ENCODE measurements at regions of chr7 and their contacts with region 1.

Region 1: DNA sequence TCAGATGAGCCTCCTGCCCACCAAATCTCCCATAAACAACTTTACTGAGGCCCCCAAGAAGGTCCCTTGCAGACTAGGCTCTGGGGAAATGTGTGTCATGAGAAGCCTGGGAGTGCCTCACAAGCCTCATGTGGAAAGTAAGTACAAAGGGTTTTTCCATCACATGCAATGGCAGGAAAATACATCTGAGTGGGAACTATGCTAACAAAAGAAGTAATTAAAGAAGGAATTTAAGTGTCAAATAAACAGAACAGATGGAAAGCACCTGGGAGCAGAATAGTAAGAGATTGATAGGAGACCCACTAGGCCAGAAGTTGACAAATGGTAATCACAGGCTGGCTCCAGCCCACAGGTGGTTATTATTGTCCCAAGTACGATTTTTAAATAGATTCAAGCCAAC is 20.5 kb downstream of the GSAP start:
- DNase-seq: no peak
- ATAC-seq: no peak
- H3K4me3 ChIP-seq: no peak overlapping the region
- H3K27ac ChIP-seq: peak overlapping the region; percentile 72
- H3K4me1 ChIP-seq: peaks cover 84% of the 10 kb centered on the region
- H3K27me3 ChIP-seq: no peaks in the 10 kb centered on the region
- CTCF ChIP-seq: no peak
- EP300 ChIP-seq: no peak
- POLR2A ChIP-seq: no peak
- RAD21 ChIP-seq: no peak

Region 2: GRCh38 chr7:77258014-77258413 is 137.6 kb before region 1 on chr7:
- CTCF ChIA-PET with region 1: no interaction called
- POLR2A ChIA-PET with region 1: no interaction called
- in situ Hi-C with region 1: no loop called
- intact Hi-C with region 1: no loop called
- DNase-seq: no peak
- ATAC-seq: no peak
- H3K4me3 ChIP-seq: no peak overlapping the region
- H3K27ac ChIP-seq: no peak overlapping the region
- H3K4me1 ChIP-seq: no peaks in the 10 kb centered on the region
- H3K27me3 ChIP-seq: no peaks in the 10 kb centered on the region
- CTCF ChIP-seq: no peak
- EP300 ChIP-seq: no peak
- POLR2A ChIP-seq: no peak
- RAD21 ChIP-seq: no peak

Region 3: GRCh38 chr7:77409739-77410547 is 14.3 kb after region 1 on chr7:
- CTCF ChIA-PET with region 1: no interaction called
- POLR2A ChIA-PET with region 1: interaction called, 22 read pairs
- in situ Hi-C with region 1: no loop called
- intact Hi-C with region 1: loop called (anchors 1 kb)
- DNase-seq: peak; percentile 95
- ATAC-seq: peak; percentile 83
- H3K4me3 ChIP-seq: peak overlapping the region; percentile 15 to 49 (median 16); a peak in 4 of 6 replicates
- H3K27ac ChIP-seq: peak overlapping the region; percentile 96
- H3K4me1 ChIP-seq: peaks cover 88% of the 10 kb centered on the region
- H3K27me3 ChIP-seq: no peaks in the 10 kb centered on the region
- CTCF ChIP-seq: no peak
- EP300 ChIP-seq: peak; percentile 69 to 97; a peak in 3 of 4 replicates
- POLR2A ChIP-seq: peak in 1 of 2 experiments; percentile 62; a peak in 1 of 4 replicates
- RAD21 ChIP-seq: no peak

Region 4: DNA sequence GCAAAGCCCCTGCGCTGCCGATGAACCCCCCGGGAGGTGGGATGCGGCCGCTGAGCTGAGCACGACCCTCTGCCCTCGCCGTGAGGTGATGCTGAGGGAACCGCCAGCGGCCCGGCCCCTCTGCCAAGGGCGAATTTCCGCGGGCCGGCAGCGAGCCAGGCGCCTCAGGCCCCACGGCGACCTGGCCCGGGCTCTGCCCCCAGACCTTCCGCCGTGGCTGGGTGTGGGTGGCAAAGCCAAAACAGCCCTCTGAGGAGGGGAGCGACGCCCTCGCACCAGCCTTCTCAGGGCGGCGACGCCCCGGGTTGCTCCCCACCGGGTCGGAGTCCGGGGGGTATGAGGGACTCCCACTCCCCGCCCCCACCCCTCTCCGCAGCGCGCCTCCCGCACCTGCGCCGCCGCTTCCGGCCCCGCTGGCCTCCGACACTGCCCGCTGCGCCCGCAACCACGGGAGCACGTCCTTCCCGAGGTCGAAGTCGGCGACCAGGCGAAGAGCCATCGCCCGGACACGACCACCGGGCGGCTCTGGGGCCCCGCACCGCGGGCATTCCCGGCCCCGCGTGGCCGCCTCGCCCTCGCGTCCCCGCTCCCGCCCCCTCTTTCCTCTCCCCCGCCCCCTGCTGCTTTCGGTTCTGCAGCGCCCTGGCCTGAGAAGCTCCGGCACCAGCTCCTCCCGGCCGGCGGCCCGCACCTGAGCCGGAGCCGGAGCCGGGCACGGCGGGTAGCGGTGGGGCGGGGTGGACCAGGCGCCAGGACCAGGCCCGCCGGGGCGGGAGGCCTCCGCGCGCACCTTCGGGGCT is 20.4 kb after region 1 on chr7 and contains the start of gene GSAP:
- CTCF ChIA-PET with region 1: no interaction called
- POLR2A ChIA-PET with region 1: interaction called, 22 read pairs
- in situ Hi-C with region 1: no loop called
- intact Hi-C with region 1: no loop called
- DNase-seq: no peak
- ATAC-seq: peak; percentile 88
- H3K4me3 ChIP-seq: peak within 1 kb of the TSS; percentile 68 to 86 (median 81)
- H3K27ac ChIP-seq: peak within 1 kb of the TSS; percentile 94
- H3K4me1 ChIP-seq: peaks cover 71% of the 10 kb centered on the region
- H3K27me3 ChIP-seq: no peaks in the 10 kb centered on the region
- CTCF ChIP-seq: no peak
- EP300 ChIP-seq: 0 out of 4 replicates have a peak, but pooled peaks of 1 of the 2 experiments have one; percentile 5
- POLR2A ChIP-seq: peak; percentile 78 to 82
- RAD21 ChIP-seq: no peak; the same call in 1 of the 2 replicates
- total RNA-seq, gene GSAP: 15.6 and 34.6 TPM in 2 replicates

Region 5: DNA sequence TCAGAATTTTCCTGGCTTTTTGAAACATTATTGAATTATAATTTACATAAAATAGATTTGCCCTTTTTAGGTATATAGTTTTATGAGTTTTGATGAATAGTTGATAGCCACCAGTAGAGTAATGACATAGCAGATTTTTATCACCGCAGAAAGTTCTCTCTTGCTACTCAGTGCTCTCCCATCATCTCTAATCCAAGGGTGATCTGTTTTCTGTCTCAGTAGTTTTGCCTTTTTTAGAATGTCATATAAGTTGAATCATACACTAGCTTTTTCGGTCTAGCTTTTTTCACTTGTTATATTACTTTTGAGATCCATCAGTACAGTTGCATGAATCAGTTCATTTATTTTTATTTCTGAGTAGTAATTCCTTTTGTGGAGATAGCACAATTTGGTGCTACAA is 318.6 kb after region 1 on chr7:
- CTCF ChIA-PET with region 1: no interaction called
- POLR2A ChIA-PET with region 1: no interaction called
- in situ Hi-C with region 1: no loop called
- intact Hi-C with region 1: no loop called
- DNase-seq: no peak
- ATAC-seq: no peak
- H3K4me3 ChIP-seq: no peak overlapping the region
- H3K27ac ChIP-seq: no peak overlapping the region
- H3K4me1 ChIP-seq: peaks cover 10% of the 10 kb centered on the region; the same call in 1 of the 2 replicates
- H3K27me3 ChIP-seq: no peaks in the 10 kb centered on the region
- CTCF ChIP-seq: no peak
- EP300 ChIP-seq: no peak
- POLR2A ChIP-seq: no peak
- RAD21 ChIP-seq: no peak